ENCODE measurements at regions of chr14 and their contacts with region 1.

Region 1: DNA sequence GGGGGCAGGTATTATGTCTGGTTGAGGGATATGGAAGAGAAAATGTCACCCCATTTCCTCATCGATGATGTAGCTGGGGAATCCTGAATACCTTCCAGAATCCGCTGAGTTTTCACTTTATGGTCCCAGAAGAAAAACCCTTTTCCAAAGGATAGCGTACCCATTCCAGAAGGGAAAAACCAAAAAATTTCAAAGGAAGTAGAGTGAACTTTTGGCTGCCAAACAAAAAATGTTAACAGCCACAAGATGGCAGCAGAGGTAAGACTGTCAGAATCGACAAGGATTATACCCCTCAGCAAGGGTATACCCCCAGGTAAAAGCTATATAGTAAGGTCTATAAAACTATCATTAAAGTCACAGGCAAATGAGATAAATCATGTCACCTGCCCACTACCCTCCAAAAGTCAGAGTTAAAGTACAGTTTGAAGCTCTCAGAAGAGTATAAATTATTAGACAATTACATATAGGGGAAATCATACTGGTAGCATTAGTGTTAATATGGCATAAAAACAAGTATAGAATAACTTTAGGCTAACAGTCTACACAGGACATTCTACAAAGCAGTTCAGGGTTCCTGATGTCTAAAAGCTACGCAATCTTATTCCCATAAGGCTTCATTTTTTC is 18.0 kb downstream of the ACIN1 start:
- DNase-seq: no peak
- ATAC-seq: peak; percentile 49
- H3K4me3 ChIP-seq: no peak overlapping the region
- H3K27ac ChIP-seq: no peak overlapping the region; the same call in 1 of the 2 replicates
- H3K4me1 ChIP-seq: peaks cover 21 to 54% of the 10 kb centered on the region in 2 experiments
- H3K27me3 ChIP-seq: no peaks in the 10 kb centered on the region
- CTCF ChIP-seq: peak; percentile 45 to 79 (median 62); a peak in 5 of 6 replicates
- POLR2A ChIP-seq: no peak
- RAD21 ChIP-seq: peak; percentile 53

Region 2: GRCh38 chr14:23095196-23096108 is 18.6 kb after region 1 on chr14 and contains the start of gene C14orf119:
- CTCF ChIA-PET with region 1: interaction called, 35 read pairs
- POLR2A ChIA-PET with region 1: interaction called, 35 read pairs
- RAD21 ChIA-PET with region 1: interaction called in 1 of 2 experiments, 3 read pairs
- intact Hi-C with region 1: no loop called
- DNase-seq: peak; percentile 99
- ATAC-seq: peak; percentile 88
- H3K4me3 ChIP-seq: peak within 1 kb of the TSS; percentile 90 to 96
- H3K27ac ChIP-seq: peak within 1 kb of the TSS; percentile 87
- H3K4me1 ChIP-seq: peaks cover 6 to 12% of the 10 kb centered on the region in 2 experiments; a peak in 2 of 4 replicates
- H3K27me3 ChIP-seq: no peaks in the 10 kb centered on the region
- CTCF ChIP-seq: no peak
- POLR2A ChIP-seq: peak; percentile 67
- RAD21 ChIP-seq: no peak
- total RNA-seq, gene C14orf119: 46.8 TPM

Region 3: DNA sequence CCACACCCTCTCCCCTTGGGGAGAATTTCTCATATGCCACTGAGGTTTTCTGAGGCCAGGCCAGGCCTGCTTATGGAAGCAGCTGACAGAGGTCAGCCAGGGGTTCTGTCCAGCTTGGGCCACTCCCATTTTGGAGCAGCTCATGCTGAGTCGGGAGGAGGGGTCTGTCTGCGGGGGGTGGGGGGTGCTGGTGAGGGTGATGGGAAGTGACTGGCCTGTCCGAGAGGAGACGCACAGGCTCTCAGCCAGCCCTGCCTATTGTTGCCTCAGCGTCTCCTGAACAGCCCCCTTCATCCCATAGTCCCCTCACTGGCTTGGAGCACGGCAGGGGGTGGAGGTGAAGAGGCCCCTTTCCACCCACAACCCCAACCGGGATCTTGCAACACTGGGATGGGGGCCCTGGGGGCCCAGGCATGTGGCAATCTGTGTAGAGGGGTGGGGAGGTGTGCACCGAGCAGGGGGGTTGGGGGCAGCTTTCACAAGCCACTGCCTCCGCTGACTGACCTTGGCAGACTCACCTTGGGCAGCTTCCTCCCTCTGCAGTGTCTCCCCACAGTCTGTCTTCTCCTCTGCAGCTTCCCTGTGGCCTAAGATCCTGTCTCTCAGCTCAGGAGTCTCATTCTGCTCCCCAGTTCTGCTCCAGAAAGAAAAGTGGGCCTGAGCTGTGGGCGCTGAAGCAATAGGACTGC is 36.7 kb after region 1 on chr14:
- CTCF ChIA-PET with region 1: interaction called, 21 read pairs
- POLR2A ChIA-PET with region 1: no interaction called
- RAD21 ChIA-PET with region 1: no interaction called
- intact Hi-C with region 1: no loop called
- DNase-seq: no peak
- ATAC-seq: no peak
- H3K4me3 ChIP-seq: no peak overlapping the region
- H3K27ac ChIP-seq: no peak overlapping the region
- H3K4me1 ChIP-seq: peaks cover 12 to 23% of the 10 kb centered on the region in 2 experiments
- H3K27me3 ChIP-seq: peaks cover 20% of the 10 kb centered on the region; the same call in 1 of the 2 replicates
- CTCF ChIP-seq: no peak
- POLR2A ChIP-seq: no peak
- RAD21 ChIP-seq: no peak

Region 4: DNA sequence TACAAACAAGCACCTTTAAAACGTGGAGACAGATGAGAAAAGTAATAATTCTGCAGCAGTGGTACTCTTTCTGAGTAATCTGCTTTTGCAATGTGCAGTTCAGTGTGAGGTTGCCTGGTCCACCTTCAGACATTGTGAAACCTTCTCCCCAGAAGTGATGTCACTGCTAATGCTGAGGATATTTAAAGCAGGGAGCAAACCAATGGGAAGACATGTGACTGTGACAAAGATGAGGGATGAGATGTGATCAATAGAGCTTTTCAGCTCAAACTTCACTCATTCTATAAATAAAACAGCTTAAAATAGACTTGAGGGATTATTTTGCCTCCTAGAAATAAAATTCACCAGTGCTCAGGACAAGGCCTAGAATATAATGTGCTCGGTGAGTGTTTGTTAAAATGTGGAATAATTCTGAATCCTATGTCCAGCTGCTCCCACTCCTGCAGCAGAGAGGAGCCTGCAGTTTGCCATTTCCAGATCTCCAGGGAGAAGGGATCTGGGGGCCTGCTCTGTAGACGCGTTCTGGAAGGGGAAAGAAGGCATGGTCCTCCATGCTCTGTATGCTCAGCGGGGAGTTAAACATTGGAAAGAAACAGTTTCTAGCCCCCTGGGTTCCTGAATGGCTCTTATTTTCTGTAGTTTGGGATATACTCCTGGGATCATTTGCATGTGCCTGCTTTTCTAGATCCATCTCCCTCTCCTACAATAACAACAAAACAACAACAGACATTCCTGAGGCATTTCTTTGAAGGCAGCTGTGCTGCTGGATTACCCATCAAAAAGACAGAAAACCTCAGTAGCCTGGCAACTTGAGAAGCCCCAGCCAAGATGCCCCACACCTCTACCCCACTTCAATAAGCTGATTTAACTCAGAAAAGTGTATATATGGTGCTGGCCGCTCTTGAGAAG is 97.6 kb after region 1 on chr14:
- CTCF ChIA-PET with region 1: no interaction called
- POLR2A ChIA-PET with region 1: no interaction called
- RAD21 ChIA-PET with region 1: no interaction called
- intact Hi-C with region 1: no loop called
- DNase-seq: no peak
- ATAC-seq: no peak
- H3K4me3 ChIP-seq: no peak overlapping the region
- H3K27ac ChIP-seq: no peak overlapping the region
- H3K4me1 ChIP-seq: no peaks in the 10 kb centered on the region
- H3K27me3 ChIP-seq: no peaks in the 10 kb centered on the region
- CTCF ChIP-seq: no peak
- POLR2A ChIP-seq: no peak
- RAD21 ChIP-seq: no peak

Region 5: GRCh38 chr14:23186913-23187654 is 110.2 kb after region 1 on chr14:
- CTCF ChIA-PET with region 1: interaction called, 3 read pairs
- POLR2A ChIA-PET with region 1: no interaction called
- RAD21 ChIA-PET with region 1: no interaction called
- intact Hi-C with region 1: loop called (anchors 1 kb)
- DNase-seq: peak; percentile 64
- ATAC-seq: peak; percentile 68
- H3K4me3 ChIP-seq: no peak overlapping the region
- H3K27ac ChIP-seq: no peak overlapping the region
- H3K4me1 ChIP-seq: peaks cover 6 to 14% of the 10 kb centered on the region in 2 experiments; a peak in 3 of 4 replicates
- H3K27me3 ChIP-seq: no peaks in the 10 kb centered on the region
- CTCF ChIP-seq: peak; percentile 76 to 98 (median 78)
- POLR2A ChIP-seq: no peak
- RAD21 ChIP-seq: peak; percentile 94